Dendritic cell treated with granulocyte-macrophage colony-stimulating factor and Interleukin-4, amounts not matched to agents 40 ng/mL and 50 ng/mL, for 4 days (primary cell): ENCODE measurements at regions of chr12 and their contacts with region 1.

Region 1: DNA sequence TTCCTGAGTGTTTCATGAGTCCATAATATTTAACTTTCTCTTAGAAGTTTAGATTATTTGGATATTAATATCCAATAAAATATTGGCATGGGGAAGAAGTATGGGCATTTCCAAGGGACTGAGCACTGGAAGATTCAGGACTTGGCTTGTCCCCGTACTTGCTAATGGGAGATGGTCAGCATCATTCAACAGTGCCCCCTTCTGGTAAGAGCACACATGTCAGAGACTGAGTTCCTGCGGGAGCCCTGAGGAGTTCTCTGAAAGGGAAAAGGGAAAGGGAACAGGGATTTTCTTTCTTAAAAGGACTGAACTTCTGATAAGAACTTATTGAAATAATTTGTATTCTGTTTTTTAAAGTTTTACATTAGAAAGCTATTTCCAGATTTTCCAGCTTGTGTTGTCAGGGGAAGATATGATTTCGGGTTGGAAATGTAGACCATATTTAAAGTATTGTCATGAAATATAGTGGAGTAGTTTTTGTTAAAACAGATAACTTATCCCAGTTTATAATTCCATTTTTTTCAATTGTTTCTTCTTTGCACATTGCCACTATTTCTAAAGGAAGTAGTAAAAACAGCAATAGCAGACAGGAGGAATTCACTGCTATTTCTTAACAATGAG is 59.8 kb upstream of the C12orf71 start:
- H3K4me3 Mint-ChIP-seq: no peak overlapping the region
- H3K27ac Mint-ChIP-seq: no peak overlapping the region
- H3K4me1 Mint-ChIP-seq: peaks cover 8% of the 10 kb centered on the region
- H3K27me3 Mint-ChIP-seq: no peaks in the 10 kb centered on the region

Region 2: DNA sequence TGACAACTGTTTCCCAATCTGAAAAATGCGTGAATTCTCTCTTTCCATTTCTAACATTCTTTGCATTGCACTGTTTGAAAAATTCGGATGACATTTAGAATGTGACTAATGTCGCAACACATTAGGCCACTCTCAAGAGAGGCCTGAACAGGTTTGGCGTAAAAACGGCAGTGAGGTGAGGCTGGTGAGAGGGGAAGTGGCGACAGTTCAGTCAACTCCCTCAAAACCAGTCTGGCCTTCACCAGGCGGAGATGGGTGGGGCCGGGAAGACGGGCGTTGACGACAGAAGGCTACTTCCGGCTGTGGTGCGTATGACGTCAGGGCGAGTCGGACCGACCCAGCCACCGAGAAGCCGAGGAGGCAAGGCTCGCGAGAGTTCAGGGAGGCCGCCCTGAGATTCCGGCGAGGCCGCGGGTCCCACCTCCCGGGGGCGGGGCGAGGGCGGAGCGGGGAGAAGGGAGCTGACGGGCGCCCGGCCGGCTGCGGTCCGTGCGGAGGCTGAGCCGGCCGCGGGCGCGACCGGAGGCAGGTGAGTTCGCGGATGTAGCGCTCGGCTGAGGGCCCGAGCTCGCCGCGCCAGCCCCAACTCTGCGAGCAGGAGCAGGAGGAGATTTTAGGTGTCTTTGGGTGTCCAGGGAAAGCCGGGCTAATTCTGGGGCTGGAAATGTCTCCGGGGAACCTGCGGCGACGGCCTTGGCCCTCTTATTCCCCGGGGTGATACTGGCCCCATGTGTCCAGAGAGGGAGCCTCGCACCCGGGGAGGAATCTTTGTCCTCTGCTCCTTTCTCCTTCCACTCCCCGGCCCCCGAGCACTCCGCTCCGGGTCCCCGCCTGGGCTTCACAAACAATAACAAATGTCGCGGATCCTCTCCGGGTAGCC is 101.8 kb after region 1 on chr12 and contains the start of gene STK38L:
- intact Hi-C with region 1: loop called (anchors 2 kb)
- H3K4me3 Mint-ChIP-seq: peak within 1 kb of the TSS; percentile 99
- H3K27ac Mint-ChIP-seq: peak within 1 kb of the TSS; percentile 98
- H3K4me1 Mint-ChIP-seq: peaks cover 50% of the 10 kb centered on the region
- H3K27me3 Mint-ChIP-seq: no peaks in the 10 kb centered on the region

Region 3: GRCh38 chr12:27627123-27627835 is 485.1 kb after region 1 on chr12:
- intact Hi-C with region 1: no loop called
- H3K4me3 Mint-ChIP-seq: no peak overlapping the region
- H3K27ac Mint-ChIP-seq: no peak overlapping the region
- H3K4me1 Mint-ChIP-seq: peaks cover 5% of the 10 kb centered on the region
- H3K27me3 Mint-ChIP-seq: no peaks in the 10 kb centered on the region